K562 (cell line): ENCODE measurements at regions of chr3 and their contacts with region 1.

Region 1: GRCh38 chr3:156554842-156555687 is at the start of gene SSR3:
- DNase-seq: peak; percentile 97 to 99 (median 97)
- ATAC-seq: peak; percentile 98
- H3K4me3 ChIP-seq: peak within 1 kb of the TSS; percentile 74
- H3K27ac ChIP-seq: peak within 1 kb of the TSS; percentile 86
- H3K4me1 ChIP-seq: peaks cover 6 to 42% of the 10 kb centered on the region in 2 experiments; a peak in 4 of 5 replicates
- H3K27me3 ChIP-seq: no peaks in the 10 kb centered on the region
- CTCF ChIP-seq: no peak; a peak in 1 of 6 replicates
- EP300 ChIP-seq: peak; percentile 9; the same call in 1 of the 2 replicates
- POLR2A ChIP-seq: peak; percentile 96
- RAD21 ChIP-seq: no peak
- polyA plus RNA-seq, gene SSR3: 423 to 464 TPM

Region 2: DNA sequence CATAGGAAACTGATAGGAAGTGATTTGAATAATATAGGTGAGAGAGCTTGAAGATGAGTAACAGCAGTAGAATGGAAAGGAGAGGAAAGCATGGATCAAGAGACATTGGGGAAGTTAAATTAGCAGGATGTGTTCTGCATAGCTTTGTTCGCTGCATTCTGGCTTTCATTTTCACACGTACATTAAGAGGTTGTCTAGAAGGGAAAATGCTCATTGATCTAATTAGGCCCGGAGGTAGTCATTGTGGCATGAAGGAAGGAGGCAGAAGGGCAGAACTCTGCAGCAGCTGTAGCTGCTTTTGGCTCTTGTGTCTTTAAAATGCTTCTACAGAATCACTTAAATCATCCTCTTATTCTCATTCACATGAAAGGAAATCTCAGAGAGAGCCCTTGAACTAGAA is 394.4 kb before region 1 on chr3:
- CTCF ChIA-PET with region 1: no interaction called
- POLR2A ChIA-PET with region 1: no interaction called
- in situ Hi-C with region 1: no loop called
- intact Hi-C with region 1: no loop called
- DNase-seq: no peak
- ATAC-seq: no peak
- H3K4me3 ChIP-seq: no peak overlapping the region
- H3K27ac ChIP-seq: no peak overlapping the region
- H3K4me1 ChIP-seq: no peaks in the 10 kb centered on the region
- H3K27me3 ChIP-seq: peaks cover 3 to 7% of the 10 kb centered on the region in 2 experiments; a peak in 3 of 5 replicates
- CTCF ChIP-seq: no peak
- EP300 ChIP-seq: no peak
- POLR2A ChIP-seq: no peak
- RAD21 ChIP-seq: no peak

Region 3: GRCh38 chr3:156535162-156535627 is 19.9 kb before region 1 on chr3:
- CTCF ChIA-PET with region 1: no interaction called
- POLR2A ChIA-PET with region 1: interaction called, 10 read pairs
- in situ Hi-C with region 1: no loop called
- intact Hi-C with region 1: no loop called
- DNase-seq: peak in 2 of 4 experiments; percentile 44 to 65
- ATAC-seq: peak; percentile 87
- H3K4me3 ChIP-seq: no peak overlapping the region
- H3K27ac ChIP-seq: no peak overlapping the region
- H3K4me1 ChIP-seq: no peaks in the 10 kb centered on the region; a peak in 1 of 5 replicates
- H3K27me3 ChIP-seq: no peaks in the 10 kb centered on the region
- CTCF ChIP-seq: peak; percentile 22 to 48 (median 42); a peak in 4 of 6 replicates
- EP300 ChIP-seq: no peak
- POLR2A ChIP-seq: no peak
- RAD21 ChIP-seq: peak; percentile 13 to 74; a peak in 2 of 4 replicates

Region 4: DNA sequence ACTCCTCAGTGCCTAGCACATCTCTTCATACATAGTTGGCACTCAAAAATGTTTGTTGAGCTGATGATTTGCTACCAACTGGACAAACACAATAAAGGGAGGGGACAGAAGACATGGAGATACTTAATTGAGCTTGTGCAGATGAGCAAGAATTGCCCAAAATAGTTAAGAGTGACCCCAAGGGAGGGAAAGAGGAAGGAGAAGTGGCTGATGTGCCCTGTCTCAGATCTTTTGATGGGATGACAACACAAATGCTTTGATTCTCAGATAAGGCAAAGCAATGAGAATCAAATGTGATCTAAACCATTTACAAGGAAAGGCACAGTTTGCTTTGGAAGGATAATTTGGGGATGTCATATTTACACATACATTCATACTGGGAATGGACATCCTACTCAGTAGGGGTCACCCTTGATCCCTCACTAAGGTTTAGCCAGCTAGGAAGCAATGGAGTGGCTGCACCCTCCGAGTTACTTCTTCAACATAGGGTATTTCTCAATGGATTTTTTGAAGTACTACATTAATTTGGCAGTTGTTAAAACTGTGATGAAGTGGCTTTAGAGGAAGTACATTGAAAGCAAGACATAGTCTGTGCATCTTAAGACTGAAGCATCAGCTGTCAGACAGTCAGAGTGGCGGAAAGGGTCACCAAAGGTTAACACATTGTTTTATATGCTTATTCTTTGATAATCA is 21.7 kb after region 1 on chr3:
- CTCF ChIA-PET with region 1: no interaction called
- POLR2A ChIA-PET with region 1: interaction called, 12 read pairs
- in situ Hi-C with region 1: no loop called
- intact Hi-C with region 1: loop called (anchors 2 kb)
- DNase-seq: no peak
- ATAC-seq: peak; percentile 50
- H3K4me3 ChIP-seq: no peak overlapping the region
- H3K27ac ChIP-seq: no peak overlapping the region
- H3K4me1 ChIP-seq: peaks cover 3 to 32% of the 10 kb centered on the region in 2 experiments; a peak in 4 of 5 replicates
- H3K27me3 ChIP-seq: no peaks in the 10 kb centered on the region
- CTCF ChIP-seq: peak in 1 of 3 experiments; percentile 45; a peak in 3 of 6 replicates
- EP300 ChIP-seq: no peak
- POLR2A ChIP-seq: no peak
- RAD21 ChIP-seq: peak; percentile 59 to 67

Region 5: DNA sequence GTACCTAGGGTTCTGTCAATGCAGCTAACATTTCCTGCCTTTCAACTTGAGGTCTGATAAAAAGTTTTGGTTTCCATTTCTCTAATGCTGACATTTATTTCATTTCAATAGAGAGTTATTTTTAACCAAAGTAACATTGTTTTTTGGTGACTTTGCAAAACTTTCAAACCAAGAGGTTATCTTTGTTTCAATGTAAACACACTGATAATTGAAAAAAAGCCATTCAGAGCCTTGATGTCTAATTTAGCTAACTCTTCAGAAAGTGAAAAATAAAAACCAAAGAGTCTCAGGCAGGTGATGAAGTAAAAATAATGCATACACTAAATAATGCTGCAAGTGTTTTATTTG is 109.7 kb after region 1 on chr3:
- CTCF ChIA-PET with region 1: no interaction called
- POLR2A ChIA-PET with region 1: no interaction called
- in situ Hi-C with region 1: loop called (anchors 5 kb)
- intact Hi-C with region 1: no loop called
- DNase-seq: no peak
- ATAC-seq: no peak
- H3K4me3 ChIP-seq: no peak overlapping the region
- H3K27ac ChIP-seq: no peak overlapping the region
- H3K4me1 ChIP-seq: peaks cover 3 to 30% of the 10 kb centered on the region in 2 experiments; a peak in 4 of 5 replicates
- H3K27me3 ChIP-seq: no peaks in the 10 kb centered on the region
- CTCF ChIP-seq: no peak
- EP300 ChIP-seq: no peak
- POLR2A ChIP-seq: no peak
- RAD21 ChIP-seq: no peak